A673 (cell line): ENCODE measurements at regions of chr1 and their contacts with region 1.

Region 1: GRCh38 chr1:226424228-226425003 is 16.5 kb upstream of the PARP1 start:
- DNase-seq: peak; percentile 74
- H3K4me3 ChIP-seq: no peak overlapping the region
- H3K27ac ChIP-seq: no peak overlapping the region
- H3K4me1 ChIP-seq: peaks cover 12% of the 10 kb centered on the region
- H3K27me3 ChIP-seq: no peaks in the 10 kb centered on the region
- CTCF ChIP-seq: peak; percentile 76

Region 2: GRCh38 chr1:225933072-225933471 is 491.3 kb before region 1 on chr1:
- CTCF ChIA-PET with region 1: no interaction called
- POLR2A ChIA-PET with region 1: no interaction called
- intact Hi-C with region 1: no loop called
- DNase-seq: no peak
- H3K4me3 ChIP-seq: no peak overlapping the region
- H3K27ac ChIP-seq: no peak overlapping the region
- H3K4me1 ChIP-seq: no peaks in the 10 kb centered on the region
- H3K27me3 ChIP-seq: no peaks in the 10 kb centered on the region
- CTCF ChIP-seq: no peak

Region 3: GRCh38 chr1:226195144-226195543 is 229.3 kb before region 1 on chr1:
- CTCF ChIA-PET with region 1: no interaction called
- POLR2A ChIA-PET with region 1: interaction called, 10 read pairs
- intact Hi-C with region 1: no loop called
- DNase-seq: no peak
- H3K4me3 ChIP-seq: no peak overlapping the region
- H3K27ac ChIP-seq: no peak overlapping the region
- H3K4me1 ChIP-seq: no peaks in the 10 kb centered on the region
- H3K27me3 ChIP-seq: no peaks in the 10 kb centered on the region
- CTCF ChIP-seq: no peak

Region 4: DNA sequence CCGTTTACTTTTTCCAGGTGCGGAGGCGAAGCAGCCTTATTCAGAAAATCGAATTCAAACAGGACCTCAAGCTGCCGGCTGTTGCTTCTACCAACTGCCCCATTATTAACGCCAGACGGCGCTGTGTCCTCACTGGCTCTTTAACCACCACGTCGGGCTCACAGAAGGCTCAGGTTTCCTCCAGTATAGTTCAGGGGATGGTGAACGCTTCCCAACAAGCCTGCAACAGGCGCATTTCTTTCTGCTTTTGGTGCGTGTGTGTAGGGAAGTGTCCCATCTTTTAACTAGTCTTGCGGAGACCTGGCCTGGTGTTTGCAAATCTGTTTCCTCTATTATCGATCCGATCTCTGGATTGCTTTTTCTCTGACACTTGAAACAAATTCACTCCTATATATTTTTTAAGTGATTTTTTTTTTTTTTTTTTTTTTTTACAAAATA is 123.4 kb after region 1 on chr1:
- CTCF ChIA-PET with region 1: no interaction called
- POLR2A ChIA-PET with region 1: no interaction called
- intact Hi-C with region 1: loop called (anchors 1 kb)
- DNase-seq: peak; percentile 95
- H3K4me3 ChIP-seq: no peak overlapping the region
- H3K27ac ChIP-seq: no peak overlapping the region
- H3K4me1 ChIP-seq: peaks cover 12% of the 10 kb centered on the region
- H3K27me3 ChIP-seq: peaks cover 29% of the 10 kb centered on the region
- CTCF ChIP-seq: peak; percentile 95

Region 5: DNA sequence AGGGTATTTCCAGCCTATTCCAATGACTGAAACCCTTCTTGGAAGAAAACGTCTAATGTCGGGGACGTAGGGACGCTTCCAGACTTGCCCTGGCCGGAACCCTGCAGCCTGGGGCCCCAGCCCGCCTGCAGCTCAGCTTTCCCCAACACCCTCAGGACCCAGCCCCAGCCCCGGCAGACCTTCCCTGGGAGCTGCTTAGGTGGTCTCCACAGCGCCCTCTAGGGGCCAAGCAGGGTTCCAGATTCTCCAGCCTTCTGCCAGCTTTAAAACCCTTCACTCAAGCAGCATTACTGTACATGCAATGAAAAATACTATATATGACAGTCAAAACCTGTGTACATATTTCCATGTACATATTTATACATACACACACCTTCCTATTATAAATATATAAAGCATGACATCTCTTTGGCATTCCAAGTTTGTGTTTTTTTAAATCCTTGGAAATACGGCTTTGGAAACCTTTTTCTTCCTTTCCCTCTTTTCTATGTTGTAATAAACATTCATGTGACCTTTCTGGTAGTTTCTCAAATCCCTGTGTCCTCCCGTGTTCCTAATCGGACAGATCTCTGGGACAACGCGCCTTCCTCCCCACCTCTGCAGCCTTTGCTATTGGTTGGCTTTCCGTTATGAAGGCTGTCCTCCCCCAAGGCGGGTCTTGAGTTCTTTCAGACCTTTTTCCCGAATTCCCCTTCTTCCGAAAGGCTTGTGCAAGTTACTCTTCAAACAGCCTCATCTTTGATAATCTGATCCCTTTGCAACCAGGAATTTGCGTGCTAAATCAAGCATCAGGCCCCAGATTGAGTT is 184.5 kb after region 1 on chr1:
- CTCF ChIA-PET with region 1: no interaction called
- POLR2A ChIA-PET with region 1: no interaction called
- intact Hi-C with region 1: loop called (anchors 1 kb)
- DNase-seq: peak; percentile 77
- H3K4me3 ChIP-seq: no peak overlapping the region
- H3K27ac ChIP-seq: no peak overlapping the region
- H3K4me1 ChIP-seq: no peaks in the 10 kb centered on the region
- H3K27me3 ChIP-seq: no peaks in the 10 kb centered on the region
- CTCF ChIP-seq: peak; percentile 92